Endothelial cell of umbilical vein (primary cell): ENCODE measurements at regions of chr14 and their contacts with region 1.

Region 1: DNA sequence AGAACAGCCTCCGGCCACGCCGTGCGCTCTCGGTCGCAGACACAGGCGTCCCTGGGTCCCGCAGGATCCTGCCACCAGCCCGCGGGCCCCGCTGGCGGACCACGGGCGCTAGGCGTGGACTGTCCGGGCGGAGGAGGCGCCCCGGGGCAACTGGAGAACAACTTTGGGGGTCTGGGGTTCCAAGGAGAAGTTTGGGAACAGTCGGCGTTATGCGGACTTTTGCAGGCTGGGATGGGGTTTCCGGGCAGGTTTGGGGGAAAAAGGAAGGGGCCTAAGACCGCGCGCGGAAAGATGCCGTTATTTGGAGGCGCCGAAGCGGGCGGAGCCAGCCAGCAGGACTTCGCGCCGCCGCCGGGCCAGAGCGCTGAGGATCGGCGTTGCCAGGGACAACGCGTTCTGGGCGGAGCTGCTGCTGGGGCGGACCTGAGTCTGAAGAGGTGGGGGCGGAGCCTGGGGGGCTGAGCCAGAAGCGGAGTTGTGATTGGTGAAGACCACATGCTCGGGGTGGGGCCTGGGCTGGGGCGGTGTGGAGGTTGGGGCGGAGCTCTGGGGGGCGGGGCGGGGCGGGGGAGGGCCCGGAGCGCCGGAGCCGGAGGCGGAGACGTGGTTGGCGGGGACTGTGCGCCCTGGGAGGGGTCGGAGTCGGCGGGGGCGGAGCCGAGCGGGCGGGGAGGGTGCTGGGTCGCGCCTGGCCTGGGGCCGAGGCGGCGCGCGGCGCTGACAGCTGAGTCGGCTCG is at the start of gene CYP46A1:
- DNase-seq: peak; percentile 99
- H3K4me3 ChIP-seq: peak within 1 kb of the TSS; percentile 56 to 94 (median 74)
- H3K27ac ChIP-seq: peak within 1 kb of the TSS; percentile 74
- H3K4me1 ChIP-seq: peaks cover 8% of the 10 kb centered on the region
- H3K27me3 ChIP-seq: peaks cover 5 to 11% of the 10 kb centered on the region in 2 experiments
- CTCF ChIP-seq: no peak
- POLR2A ChIP-seq: peak; percentile 16
- total RNA-seq, gene CYP46A1: 0.14 and 0.24 TPM in 2 replicates

Region 2: GRCh38 chr14:99155173-99156089 is 528.4 kb before region 1 on chr14:
- CTCF ChIA-PET with region 1: no interaction called
- POLR2A ChIA-PET with region 1: no interaction called
- dilution Hi-C with region 1: no loop called
- intact Hi-C with region 1: no loop called
- DNase-seq: no peak
- H3K4me3 ChIP-seq: no peak overlapping the region
- H3K27ac ChIP-seq: no peak overlapping the region
- H3K4me1 ChIP-seq: no peaks in the 10 kb centered on the region
- H3K27me3 ChIP-seq: no peaks in the 10 kb centered on the region
- CTCF ChIP-seq: no peak
- POLR2A ChIP-seq: no peak

Region 3: DNA sequence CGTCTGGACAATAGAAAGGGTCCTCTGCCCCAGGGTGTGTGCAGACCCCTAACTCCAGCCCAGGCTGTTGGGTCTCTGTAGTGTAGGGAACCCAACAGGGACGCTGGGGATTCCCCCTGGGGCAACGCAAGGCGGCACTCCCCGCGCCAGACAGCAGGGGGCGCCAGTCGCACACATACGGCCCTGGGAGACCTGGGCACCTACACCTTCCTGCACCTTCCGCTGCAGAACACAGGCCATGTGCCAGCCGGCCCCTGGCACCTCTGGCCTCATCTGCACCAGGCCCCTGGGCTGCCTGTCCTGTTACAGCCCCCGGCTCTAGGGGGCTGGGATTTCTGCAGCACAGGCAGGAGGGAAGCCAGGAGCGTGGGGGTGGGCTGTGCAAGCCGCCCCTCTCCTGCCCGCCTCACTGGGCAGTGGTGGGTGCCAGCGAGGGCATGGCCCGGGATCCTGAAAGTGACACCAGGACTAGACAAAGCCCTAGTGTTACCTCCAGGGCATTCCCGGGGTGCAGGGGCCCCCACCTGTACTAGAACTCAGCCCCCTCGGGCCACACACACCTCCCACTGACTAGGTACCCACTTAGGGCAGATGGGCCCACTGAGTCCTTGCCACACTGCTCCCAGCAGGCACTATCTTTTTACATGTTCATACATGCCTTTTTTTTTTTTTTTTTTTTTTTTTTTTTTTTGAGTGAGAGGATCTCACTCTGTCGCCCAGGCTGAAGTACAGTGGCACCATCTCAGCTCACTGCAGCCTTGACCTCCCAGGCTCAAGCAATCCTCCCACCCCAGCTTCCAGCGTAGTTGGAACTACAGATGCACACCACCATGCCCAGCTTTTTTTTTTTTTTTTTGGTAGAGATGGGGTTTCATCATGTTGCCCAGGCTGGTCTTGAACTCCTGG is 165.1 kb before region 1 on chr14:
- CTCF ChIA-PET with region 1: interaction called, 3 read pairs
- POLR2A ChIA-PET with region 1: no interaction called
- dilution Hi-C with region 1: no loop called
- intact Hi-C with region 1: loop called (anchors 1 kb)
- DNase-seq: peak; percentile 55
- H3K4me3 ChIP-seq: no peak overlapping the region
- H3K27ac ChIP-seq: no peak overlapping the region
- H3K4me1 ChIP-seq: peaks cover 9% of the 10 kb centered on the region
- H3K27me3 ChIP-seq: no peaks in the 10 kb centered on the region
- CTCF ChIP-seq: peak; percentile 94 to 97
- POLR2A ChIP-seq: no peak

Region 4: DNA sequence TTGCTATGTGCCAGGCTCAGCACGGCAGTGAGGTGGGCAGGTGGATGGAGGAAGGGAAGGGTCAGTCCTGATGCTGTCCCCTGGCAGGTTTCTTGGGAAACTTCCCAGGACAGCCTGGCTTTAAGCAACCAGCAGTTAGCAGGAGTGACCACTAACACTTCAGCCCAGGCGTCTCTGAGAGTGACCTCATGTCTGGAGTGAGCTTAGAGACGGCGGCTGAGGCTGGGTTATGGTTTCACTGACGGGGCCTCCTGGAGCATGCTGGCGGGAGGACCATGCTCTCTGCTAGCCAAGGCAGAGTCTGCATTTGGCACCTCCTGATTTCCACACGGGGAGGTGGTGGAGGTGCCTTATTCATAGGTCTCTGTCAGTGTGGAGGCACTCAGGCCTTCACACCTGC is 36.4 kb before region 1 on chr14:
- CTCF ChIA-PET with region 1: no interaction called
- POLR2A ChIA-PET with region 1: no interaction called
- dilution Hi-C with region 1: no loop called
- intact Hi-C with region 1: no loop called
- DNase-seq: no peak
- H3K4me3 ChIP-seq: no peak overlapping the region
- H3K27ac ChIP-seq: no peak overlapping the region
- H3K4me1 ChIP-seq: no peaks in the 10 kb centered on the region
- H3K27me3 ChIP-seq: no peaks in the 10 kb centered on the region
- CTCF ChIP-seq: no peak
- POLR2A ChIP-seq: no peak

Region 5: DNA sequence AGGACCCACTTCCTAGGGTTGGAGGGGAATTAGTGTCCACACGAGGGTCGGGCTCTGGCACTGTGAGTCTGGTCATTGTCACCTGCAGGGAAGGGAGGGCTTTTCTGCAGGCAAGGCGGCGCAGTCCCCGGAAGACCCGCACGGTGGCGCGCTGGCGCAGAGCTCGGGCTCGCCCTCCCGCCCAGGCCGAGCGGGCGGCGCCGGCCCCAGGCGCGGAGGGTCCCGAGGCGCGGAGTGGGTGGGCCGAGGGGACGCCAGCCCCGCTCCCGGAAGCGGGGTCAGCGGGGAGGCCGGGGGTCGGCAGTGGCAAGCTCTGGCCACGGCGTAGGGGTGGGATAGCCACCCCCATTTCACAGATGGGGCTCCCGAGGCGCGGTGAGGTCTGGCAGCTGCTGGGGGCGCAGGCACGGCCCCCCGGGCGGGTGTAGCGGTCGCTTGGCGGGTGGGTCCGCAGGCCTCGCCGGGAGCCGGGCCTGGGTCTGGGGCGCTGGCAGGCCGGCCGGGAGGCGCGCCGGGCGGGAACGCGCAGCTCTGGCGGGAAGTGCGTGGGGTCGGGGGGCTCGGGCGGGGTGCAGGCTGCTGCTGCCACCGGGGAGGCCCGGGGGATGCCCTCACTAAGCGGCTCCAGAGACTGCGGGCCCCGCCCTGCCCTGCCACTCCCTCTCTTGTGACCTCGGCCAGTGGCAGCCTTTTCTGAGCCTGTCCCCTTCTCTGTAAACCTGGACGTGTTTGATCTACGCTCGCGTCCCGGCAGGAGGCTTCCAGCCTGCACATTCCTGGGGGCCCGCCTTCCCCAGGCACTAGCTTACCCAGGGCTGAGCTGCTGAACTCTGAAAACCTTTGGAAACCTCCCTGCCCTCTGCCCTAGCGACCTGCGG is 46.4 kb after region 1 on chr14:
- CTCF ChIA-PET with region 1: interaction called, 5 read pairs
- POLR2A ChIA-PET with region 1: no interaction called
- dilution Hi-C with region 1: no loop called
- intact Hi-C with region 1: loop called (anchors 5 kb)
- DNase-seq: peak; percentile 58
- H3K4me3 ChIP-seq: peak overlapping the region; percentile 15 to 58 (median 38)
- H3K27ac ChIP-seq: peak overlapping the region; percentile 17
- H3K4me1 ChIP-seq: peaks cover 22% of the 10 kb centered on the region
- H3K27me3 ChIP-seq: no peaks in the 10 kb centered on the region
- CTCF ChIP-seq: peak; percentile 86 to 94
- POLR2A ChIP-seq: no peak

Region 6: DNA sequence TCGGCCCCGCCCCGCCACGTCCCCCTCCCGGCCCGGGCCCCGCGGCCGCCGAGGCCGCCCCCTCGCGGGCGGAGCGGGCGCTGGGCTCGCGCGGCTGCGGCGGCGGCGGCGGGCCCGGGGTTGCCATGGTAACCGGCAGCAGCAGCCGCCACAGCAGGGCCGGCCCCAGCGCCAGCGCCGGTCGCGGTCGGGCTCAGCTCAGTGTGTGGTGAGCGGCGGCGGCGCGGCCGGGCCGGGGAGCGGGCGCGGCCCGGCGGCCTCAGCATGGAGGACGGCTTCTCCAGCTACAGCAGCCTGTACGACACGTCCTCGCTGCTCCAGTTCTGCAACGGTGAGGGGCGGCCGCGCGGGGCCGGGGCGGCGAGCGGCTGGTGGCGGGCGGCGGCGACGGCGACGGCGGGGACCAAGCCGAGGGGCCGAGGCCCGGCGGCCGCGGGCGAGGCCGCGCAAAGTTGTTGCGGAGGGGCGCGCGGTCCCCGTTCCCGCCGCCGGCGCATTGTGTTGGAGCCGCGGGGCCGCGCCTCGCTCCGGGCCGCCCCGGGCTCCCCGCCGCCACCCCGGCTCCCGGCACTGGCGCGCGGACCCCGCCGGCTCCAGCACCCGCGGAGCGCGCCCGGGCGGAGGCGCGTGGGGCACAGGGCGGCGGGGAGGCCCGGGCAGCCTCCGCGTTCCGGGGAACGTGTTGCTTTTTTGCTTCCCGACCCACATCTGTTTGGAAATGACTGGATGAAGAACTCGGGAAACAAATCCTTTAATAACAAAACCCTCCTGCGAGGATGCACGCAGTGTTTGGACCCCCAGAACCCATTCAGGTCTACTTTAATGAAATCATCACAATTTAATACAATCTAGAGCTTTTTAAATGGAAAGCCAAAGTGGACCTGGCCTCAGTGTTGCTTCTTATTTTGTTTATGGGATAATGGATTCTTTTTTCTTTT is 109.7 kb after region 1 on chr14 and contains the start of gene EML1:
- CTCF ChIA-PET with region 1: no interaction called
- POLR2A ChIA-PET with region 1: no interaction called
- dilution Hi-C with region 1: no loop called
- intact Hi-C with region 1: loop called (anchors 1 kb)
- DNase-seq: peak; percentile 64
- H3K4me3 ChIP-seq: peak within 1 kb of the TSS; percentile 35 to 91 (median 65)
- H3K27ac ChIP-seq: peak within 1 kb of the TSS; percentile 15
- H3K4me1 ChIP-seq: peaks cover 20% of the 10 kb centered on the region
- H3K27me3 ChIP-seq: no peaks in the 10 kb centered on the region
- CTCF ChIP-seq: no peak
- POLR2A ChIP-seq: peak; percentile 56
- total RNA-seq, gene EML1: 33.0 and 47.8 TPM in 2 replicates

Region 7: GRCh38 chr14:99899578-99900178 is 215.9 kb after region 1 on chr14:
- CTCF ChIA-PET with region 1: interaction called, 27 read pairs
- POLR2A ChIA-PET with region 1: no interaction called
- dilution Hi-C with region 1: no loop called
- intact Hi-C with region 1: loop called (anchors 1 kb)
- DNase-seq: peak; percentile 45
- H3K4me3 ChIP-seq: no peak overlapping the region
- H3K27ac ChIP-seq: no peak overlapping the region
- H3K4me1 ChIP-seq: no peaks in the 10 kb centered on the region
- H3K27me3 ChIP-seq: no peaks in the 10 kb centered on the region
- CTCF ChIP-seq: peak; percentile 21 to 29
- POLR2A ChIP-seq: no peak

Region 8: DNA sequence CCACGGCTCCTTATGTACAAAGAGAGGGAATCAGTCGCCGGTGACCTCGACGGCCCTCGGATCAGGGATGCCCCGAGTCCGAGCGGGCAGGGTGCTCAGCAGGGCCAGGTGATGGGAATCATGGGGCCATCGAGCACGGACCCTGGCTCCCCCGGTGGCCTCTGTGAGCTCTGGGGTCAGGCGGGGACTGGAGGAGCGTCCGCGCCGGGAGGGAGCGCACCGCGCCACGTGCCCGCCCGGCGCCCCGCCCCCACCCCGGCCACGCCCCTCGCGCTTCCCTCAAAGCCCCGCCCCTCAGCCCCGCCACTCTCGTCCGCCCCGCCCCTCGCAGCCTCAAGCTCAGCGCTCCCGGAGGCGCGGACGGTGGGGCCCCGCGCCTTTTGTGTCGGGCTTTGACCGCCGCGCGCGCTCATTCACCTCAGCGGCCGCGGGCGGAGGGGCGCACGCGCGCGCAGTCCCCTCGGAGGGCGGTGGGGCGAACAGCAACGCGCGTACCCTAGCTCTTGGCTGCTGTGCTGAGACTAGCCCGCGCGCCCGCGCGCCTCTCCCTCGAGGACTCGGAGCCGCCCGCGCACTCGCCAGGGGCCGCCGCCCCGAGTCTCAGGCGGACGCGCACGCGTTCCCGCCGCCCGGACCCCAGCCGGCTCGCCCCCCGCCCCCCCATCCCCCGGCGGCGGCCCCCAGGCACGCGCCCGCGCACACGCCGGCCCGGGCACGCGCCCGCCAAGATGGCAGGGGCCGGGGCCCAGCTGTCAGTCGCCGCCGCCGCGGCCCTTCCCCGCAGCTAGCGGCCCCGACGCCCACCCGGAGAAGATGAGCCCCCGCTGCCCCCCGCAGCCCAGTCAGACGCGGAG is 287.5 kb after region 1 on chr14:
- CTCF ChIA-PET with region 1: no interaction called
- POLR2A ChIA-PET with region 1: interaction called, 4 read pairs
- dilution Hi-C with region 1: no loop called
- intact Hi-C with region 1: loop called (anchors 2 kb)
- DNase-seq: peak; percentile 85
- H3K4me3 ChIP-seq: peak overlapping the region; percentile 47 to 80 (median 49)
- H3K27ac ChIP-seq: no peak overlapping the region
- H3K4me1 ChIP-seq: peaks cover 7% of the 10 kb centered on the region
- H3K27me3 ChIP-seq: peaks cover 10 to 12% of the 10 kb centered on the region in 2 experiments
- CTCF ChIP-seq: no peak
- POLR2A ChIP-seq: peak; percentile 33